Mammary epithelial cell (primary cell): ENCODE measurements at regions of chr15 and their contacts with region 1.

Region 1: DNA sequence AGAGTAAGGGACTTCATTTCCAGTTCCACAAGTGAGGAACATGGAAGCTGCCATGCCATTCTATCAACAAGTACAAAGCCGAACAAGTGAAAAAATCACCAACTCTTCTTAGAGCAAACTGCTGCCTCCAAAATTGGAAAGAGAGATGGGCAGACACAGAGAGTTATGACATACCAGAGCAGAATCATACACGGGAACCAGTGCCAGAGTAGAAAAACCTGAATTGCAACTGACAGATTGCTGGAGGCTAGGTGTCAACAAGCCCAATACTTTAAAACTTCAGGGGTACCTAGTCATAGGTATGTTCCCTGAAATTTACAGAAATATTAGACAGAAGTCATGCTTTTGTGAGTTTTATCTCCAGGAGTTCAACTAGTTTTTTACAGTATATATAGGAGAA is 62.0 kb downstream of the TTBK2 start:
- DNase-seq: peak; percentile 75
- H3K4me3 ChIP-seq: no peak overlapping the region
- H3K27ac ChIP-seq: no peak overlapping the region
- H3K4me1 ChIP-seq: peaks cover 19% of the 10 kb centered on the region
- H3K27me3 ChIP-seq: no peaks in the 10 kb centered on the region
- CTCF ChIP-seq: no peak

Region 2: GRCh38 chr15:42891569-42891968 is 33.0 kb after region 1 on chr15:
- CTCF ChIA-PET with region 1: no interaction called
- dilution Hi-C with region 1: no loop called
- in situ Hi-C with region 1: no loop called
- intact Hi-C with region 1: loop called (anchors 5 kb)
- DNase-seq: no peak
- H3K4me3 ChIP-seq: no peak overlapping the region
- H3K27ac ChIP-seq: no peak overlapping the region
- H3K4me1 ChIP-seq: peaks cover 21% of the 10 kb centered on the region
- H3K27me3 ChIP-seq: no peaks in the 10 kb centered on the region
- CTCF ChIP-seq: no peak